HAP-1 (cell line): ENCODE measurements at regions of chr12 and their contacts with region 1.

Region 1: GRCh38 chr12:108526482-108527165 is 11.5 kb downstream of the FICD start:
- DNase-seq: no peak
- H3K4me3 ChIP-seq: no peak overlapping the region
- H3K4me1 ChIP-seq: no peaks in the 10 kb centered on the region
- H3K27me3 ChIP-seq: no peaks in the 10 kb centered on the region

Region 2: DNA sequence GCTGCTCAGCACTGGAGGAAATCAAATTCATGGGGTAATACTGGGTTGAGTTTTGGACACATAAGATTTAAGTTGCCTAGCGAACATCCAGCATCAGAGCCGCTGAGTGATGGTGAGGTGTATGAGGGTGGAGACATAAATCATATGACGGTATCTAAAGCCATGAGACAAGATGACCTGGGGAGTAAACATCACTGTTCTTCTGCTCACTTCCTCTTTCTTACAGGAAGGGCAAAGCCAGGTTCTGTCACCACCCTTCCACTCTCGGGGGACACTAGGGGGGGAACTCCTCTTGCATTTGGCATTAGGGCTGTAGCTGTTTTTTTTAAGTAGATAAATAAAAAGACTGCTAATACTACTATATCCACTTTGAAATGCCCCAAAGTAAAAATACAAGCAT is 789.7 kb before region 1 on chr12:
- in situ Hi-C with region 1: loop called (anchors 25 kb)
- DNase-seq: no peak
- H3K4me3 ChIP-seq: no peak overlapping the region
- H3K4me1 ChIP-seq: no peaks in the 10 kb centered on the region
- H3K27me3 ChIP-seq: no peaks in the 10 kb centered on the region

Region 3: GRCh38 chr12:108950991-108951739 is 424.5 kb after region 1 on chr12:
- in situ Hi-C with region 1: no loop called
- DNase-seq: peak; percentile 48 to 75
- H3K4me3 ChIP-seq: no peak overlapping the region
- H3K4me1 ChIP-seq: no peaks in the 10 kb centered on the region
- H3K27me3 ChIP-seq: peaks cover 5% of the 10 kb centered on the region; the same call in 1 of the 2 replicates